ENCODE measurements at regions of chr11 and their contacts with region 1.

Region 1: GRCh38 chr11:95705485-95706124 is 84.0 kb downstream of the FAM76B start:
- DNase-seq: peak; percentile 92
- ATAC-seq: peak; percentile 91
- H3K4me3 Mint-ChIP-seq: no peak overlapping the region
- H3K27ac Mint-ChIP-seq: no peak overlapping the region
- H3K4me1 Mint-ChIP-seq: peaks cover 9% of the 10 kb centered on the region
- H3K27me3 Mint-ChIP-seq: no peaks in the 10 kb centered on the region

Region 2: DNA sequence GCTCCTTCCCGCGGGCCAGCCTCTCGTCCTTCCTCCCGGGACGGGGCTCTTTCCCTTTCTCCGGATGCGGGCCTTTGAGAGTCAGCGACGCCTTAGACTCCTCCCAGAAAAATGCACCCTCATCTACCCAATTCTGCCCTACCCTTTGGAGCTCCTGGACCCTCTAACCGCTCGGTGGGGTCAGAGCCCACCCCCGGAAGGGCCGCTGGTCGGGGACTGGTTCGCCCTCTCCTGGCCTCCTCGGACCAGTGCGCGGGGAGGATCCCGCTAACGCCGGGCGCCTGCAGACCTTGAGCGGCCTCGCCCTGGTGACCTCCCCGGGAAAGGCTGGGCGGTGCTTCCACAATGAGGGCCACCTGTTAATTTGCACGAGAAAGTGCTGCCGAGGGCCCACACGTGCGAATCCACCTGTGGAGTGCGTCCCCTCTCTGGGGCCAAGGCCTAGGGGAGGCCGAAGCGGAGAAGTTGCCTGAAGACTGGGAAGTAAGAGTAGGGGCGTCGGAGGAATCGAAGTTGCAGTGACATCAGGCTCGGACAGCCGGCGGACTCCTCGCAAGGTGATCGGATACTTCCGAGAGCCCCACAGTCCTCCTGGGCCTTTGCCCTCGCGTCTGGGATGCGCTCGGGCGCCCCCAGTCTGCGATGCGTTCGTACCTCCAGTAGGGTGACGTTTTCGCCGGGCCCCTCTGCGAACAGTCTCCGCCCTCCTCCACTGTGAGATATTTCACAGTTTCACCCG is 554.5 kb before region 1 on chr11:
- CTCF ChIA-PET with region 1: interaction called, 362 read pairs
- POLR2A ChIA-PET with region 1: interaction called, 8 read pairs
- DNase-seq: peak; percentile 96
- ATAC-seq: peak; percentile 96
- H3K4me3 Mint-ChIP-seq: peak overlapping the region; percentile 82
- H3K27ac Mint-ChIP-seq: peak overlapping the region; percentile 91
- H3K4me1 Mint-ChIP-seq: peaks cover 38% of the 10 kb centered on the region
- H3K27me3 Mint-ChIP-seq: peaks cover 7% of the 10 kb centered on the region

Region 3: GRCh38 chr11:95254131-95254704 is 451.4 kb before region 1 on chr11:
- CTCF ChIA-PET with region 1: interaction called, 22 read pairs
- POLR2A ChIA-PET with region 1: no interaction called
- DNase-seq: peak; percentile 91
- ATAC-seq: peak; percentile 100
- H3K4me3 Mint-ChIP-seq: peak overlapping the region; percentile 76
- H3K27ac Mint-ChIP-seq: peak overlapping the region; percentile 79
- H3K4me1 Mint-ChIP-seq: peaks cover 42% of the 10 kb centered on the region
- H3K27me3 Mint-ChIP-seq: peaks cover 2% of the 10 kb centered on the region

Region 4: DNA sequence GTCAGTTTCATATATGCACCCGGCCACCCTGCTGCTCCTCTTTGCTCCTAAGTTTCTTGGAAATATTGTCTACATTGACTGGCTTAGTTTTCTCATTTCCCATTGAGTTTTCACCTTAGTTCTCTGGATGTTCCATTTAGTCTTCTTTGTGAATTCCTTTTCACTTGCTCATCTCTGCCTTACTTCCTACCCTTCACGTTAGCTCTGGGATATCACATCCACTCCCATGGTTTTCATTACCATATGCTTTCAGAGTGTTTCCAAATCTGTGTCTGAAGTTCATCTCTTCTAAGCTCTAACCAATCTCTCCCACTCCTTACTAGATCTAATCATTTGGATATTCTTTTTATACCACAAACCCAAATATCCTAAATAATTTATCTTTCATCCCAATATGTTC is 142.4 kb before region 1 on chr11:
- CTCF ChIA-PET with region 1: interaction called, 12 read pairs
- POLR2A ChIA-PET with region 1: no interaction called
- DNase-seq: no peak
- ATAC-seq: no peak
- H3K4me3 Mint-ChIP-seq: no peak overlapping the region
- H3K27ac Mint-ChIP-seq: no peak overlapping the region
- H3K4me1 Mint-ChIP-seq: peaks cover 7% of the 10 kb centered on the region
- H3K27me3 Mint-ChIP-seq: no peaks in the 10 kb centered on the region

Region 5: GRCh38 chr11:95680169-95680929 is 25.3 kb before region 1 on chr11:
- CTCF ChIA-PET with region 1: interaction called, 32 read pairs
- POLR2A ChIA-PET with region 1: no interaction called
- DNase-seq: no peak
- ATAC-seq: no peak
- H3K4me3 Mint-ChIP-seq: no peak overlapping the region
- H3K27ac Mint-ChIP-seq: peak overlapping the region; percentile 68
- H3K4me1 Mint-ChIP-seq: peaks cover 50% of the 10 kb centered on the region
- H3K27me3 Mint-ChIP-seq: no peaks in the 10 kb centered on the region

Region 6: DNA sequence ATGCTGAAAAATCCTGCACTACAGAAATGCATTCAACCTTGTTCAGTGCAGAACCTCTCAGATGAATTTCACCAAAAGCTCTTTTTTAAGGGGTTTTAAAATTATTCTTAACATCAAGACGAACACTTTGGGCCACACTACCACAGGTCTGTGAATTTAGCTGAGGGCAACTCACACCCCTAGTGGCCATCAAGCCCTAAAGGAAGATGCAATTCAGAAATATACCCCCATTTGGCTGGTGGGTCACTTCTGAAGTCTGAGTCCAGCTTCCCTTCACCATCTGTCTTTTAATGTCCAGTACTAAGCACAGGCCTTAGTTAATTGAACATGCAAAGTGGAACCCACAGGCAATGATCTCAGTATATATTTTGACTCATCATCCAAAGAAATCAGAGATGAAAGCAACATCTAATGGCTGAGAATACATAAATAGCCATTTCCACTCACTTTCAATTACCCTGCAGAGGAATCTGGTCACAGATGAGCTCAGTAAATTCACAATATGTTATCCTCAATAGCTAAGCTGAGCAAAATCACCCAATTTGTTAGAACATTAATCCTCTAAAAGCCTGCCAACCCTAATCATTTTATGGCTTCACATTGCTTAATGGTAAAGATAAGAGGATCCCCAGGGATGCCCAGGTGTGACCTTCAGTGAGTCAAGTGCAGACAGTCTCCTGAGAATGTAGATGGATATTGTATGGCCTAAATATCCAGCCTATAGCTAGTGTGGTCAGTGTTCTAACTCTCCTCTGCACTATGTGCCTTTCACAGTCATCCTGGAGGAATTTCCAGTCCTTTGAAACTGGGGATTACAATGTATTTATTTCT is 33.7 kb after region 1 on chr11:
- CTCF ChIA-PET with region 1: interaction called, 12 read pairs
- POLR2A ChIA-PET with region 1: no interaction called
- DNase-seq: no peak
- ATAC-seq: no peak
- H3K4me3 Mint-ChIP-seq: no peak overlapping the region
- H3K27ac Mint-ChIP-seq: no peak overlapping the region
- H3K4me1 Mint-ChIP-seq: peaks cover 3% of the 10 kb centered on the region
- H3K27me3 Mint-ChIP-seq: peaks cover 12% of the 10 kb centered on the region

Region 7: DNA sequence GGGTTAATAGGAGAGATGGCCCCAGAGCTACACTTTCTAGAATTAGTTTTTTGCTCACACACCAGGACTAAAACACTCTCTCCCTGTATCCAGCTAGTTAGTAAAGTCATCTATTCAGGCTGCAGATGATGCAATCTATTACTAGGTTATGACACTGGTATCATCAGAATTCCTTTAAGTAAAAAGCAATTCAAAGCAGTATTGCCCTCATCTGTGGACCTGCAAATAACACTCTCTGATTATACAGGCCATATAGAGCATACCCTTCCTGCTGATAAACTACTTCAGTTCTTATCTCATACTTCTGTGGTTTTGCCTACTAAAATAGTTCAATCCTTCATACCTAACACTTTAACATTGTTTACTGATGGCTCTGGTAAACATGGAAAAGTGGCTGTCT is 231.8 kb after region 1 on chr11:
- CTCF ChIA-PET with region 1: no interaction called
- POLR2A ChIA-PET with region 1: no interaction called
- DNase-seq: no peak
- ATAC-seq: no peak
- H3K4me3 Mint-ChIP-seq: no peak overlapping the region
- H3K27ac Mint-ChIP-seq: no peak overlapping the region
- H3K4me1 Mint-ChIP-seq: no peaks in the 10 kb centered on the region
- H3K27me3 Mint-ChIP-seq: no peaks in the 10 kb centered on the region